GM18951 (cell line): ENCODE measurements at regions of chr1 and their contacts with region 1.

Region 1: GRCh38 chr1:111656086-111657017 is 36.8 kb downstream of the RAP1A start:
- POLR2A ChIP-seq: no peak

Region 2: GRCh38 chr1:111507411-111508201 is 148.7 kb before region 1 on chr1:
- in situ Hi-C with region 1: loop called (anchors 10 kb)
- POLR2A ChIP-seq: peak; percentile 54